Activated B cell treated with CpG ODN at 0.5 μM for 24 hours (primary cell): ENCODE measurements at regions of chr12 and their contacts with region 1.

Region 1: GRCh38 chr12:54032627-54033100 is at the start of gene HOXC5:
- DNase-seq: peak; percentile 51
- ATAC-seq: peak; percentile 63
- H3K4me3 Mint-ChIP-seq: peak within 1 kb of the TSS; percentile 70
- H3K27ac Mint-ChIP-seq: peak within 1 kb of the TSS; percentile 24
- H3K4me1 Mint-ChIP-seq: peaks cover 30% of the 10 kb centered on the region
- H3K27me3 Mint-ChIP-seq: peaks cover 57% of the 10 kb centered on the region
- CTCF ChIP-seq: peak; percentile 66
- total RNA-seq, gene HOXC5: not detected in 2 replicates

Region 2: GRCh38 chr12:53961025-53961761 is 71.5 kb before region 1 on chr12:
- CTCF ChIA-PET with region 1: interaction called, 4 read pairs
- POLR2A ChIA-PET with region 1: interaction called, 5 read pairs
- intact Hi-C with region 1: loop called (anchors 5 kb)
- DNase-seq: no peak
- ATAC-seq: no peak
- H3K4me3 Mint-ChIP-seq: no peak overlapping the region
- H3K27ac Mint-ChIP-seq: no peak overlapping the region
- H3K4me1 Mint-ChIP-seq: peaks cover 26% of the 10 kb centered on the region
- H3K27me3 Mint-ChIP-seq: peaks cover 80% of the 10 kb centered on the region
- CTCF ChIP-seq: no peak

Region 3: DNA sequence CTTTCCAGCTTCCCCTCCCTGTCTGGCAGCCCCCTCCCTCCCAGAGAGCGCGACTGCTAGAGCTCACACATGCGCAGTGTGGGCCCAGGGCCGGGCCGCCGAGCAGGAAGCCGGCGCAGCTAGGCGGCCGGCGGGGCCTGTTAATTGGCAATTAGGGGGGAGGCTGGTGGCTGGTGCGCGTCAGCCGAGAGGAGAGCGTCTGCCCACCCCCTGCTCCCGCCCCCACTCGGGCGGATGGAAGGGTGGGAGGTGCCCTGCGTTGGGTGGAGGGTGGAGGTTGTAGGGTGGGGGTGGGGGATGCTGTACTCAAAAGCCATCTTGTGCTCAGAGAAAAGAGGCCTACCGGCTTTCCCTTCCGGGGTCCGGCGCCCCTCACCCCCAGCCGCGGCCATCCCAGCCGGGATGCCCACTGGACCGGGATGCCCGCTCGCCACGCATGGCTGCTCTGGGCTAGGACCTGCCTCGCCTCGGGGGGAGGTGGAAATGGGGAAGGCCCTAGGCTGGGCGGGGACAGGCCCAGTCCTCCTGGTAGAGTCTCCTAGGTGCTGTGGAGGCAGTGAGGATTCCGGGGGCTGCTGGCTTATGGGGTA is 14.7 kb before region 1 on chr12:
- CTCF ChIA-PET with region 1: interaction called, 12 read pairs
- POLR2A ChIA-PET with region 1: interaction called, 5 read pairs
- intact Hi-C with region 1: no loop called
- DNase-seq: peak; percentile 67
- ATAC-seq: peak; percentile 88
- H3K4me3 Mint-ChIP-seq: peak overlapping the region; percentile 84
- H3K27ac Mint-ChIP-seq: peak overlapping the region; percentile 72
- H3K4me1 Mint-ChIP-seq: peaks cover 29% of the 10 kb centered on the region
- H3K27me3 Mint-ChIP-seq: peaks cover 64% of the 10 kb centered on the region
- CTCF ChIP-seq: no peak

Region 4: DNA sequence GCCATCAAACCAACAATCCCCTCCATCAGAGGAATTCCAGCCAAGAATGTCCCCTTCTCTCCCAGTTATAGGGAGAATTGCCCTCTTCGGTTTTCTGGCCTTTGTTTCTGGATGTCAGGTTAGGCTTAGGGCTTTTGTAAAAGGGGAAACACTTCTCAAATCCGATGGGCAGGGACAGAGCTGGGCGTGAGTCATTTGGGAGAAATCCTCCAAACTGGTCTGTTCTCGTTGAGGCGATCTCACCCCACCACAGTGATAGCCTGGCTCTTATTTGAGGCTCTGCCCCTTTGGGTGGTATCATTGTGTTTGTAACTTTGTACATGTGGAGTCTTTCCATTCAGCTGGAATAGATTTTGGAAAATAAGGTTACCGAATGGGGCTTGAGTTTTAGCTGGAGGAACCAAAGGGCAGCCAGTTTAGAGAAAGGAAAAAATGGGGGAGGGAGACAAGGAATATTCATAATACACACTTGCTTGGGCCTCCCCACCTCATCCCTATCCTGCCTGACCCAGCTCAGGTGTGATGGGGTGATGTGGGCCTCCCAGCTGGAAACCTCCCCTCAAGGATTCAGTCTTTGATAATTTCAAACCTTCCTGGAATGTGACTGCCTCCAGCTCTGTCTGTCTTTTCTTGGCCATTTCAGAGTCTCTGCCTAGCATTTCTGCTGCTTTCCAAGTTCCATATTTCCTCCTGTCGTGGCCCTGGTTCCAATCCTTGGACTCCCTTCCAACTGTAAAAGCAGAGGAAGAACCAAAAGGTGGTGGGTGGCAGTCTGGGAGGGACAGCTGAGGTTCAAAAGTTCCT is 28.5 kb after region 1 on chr12:
- CTCF ChIA-PET with region 1: no interaction called
- POLR2A ChIA-PET with region 1: no interaction called
- intact Hi-C with region 1: no loop called
- DNase-seq: no peak
- ATAC-seq: no peak
- H3K4me3 Mint-ChIP-seq: no peak overlapping the region
- H3K27ac Mint-ChIP-seq: no peak overlapping the region
- H3K4me1 Mint-ChIP-seq: peaks cover 1% of the 10 kb centered on the region
- H3K27me3 Mint-ChIP-seq: peaks cover 35% of the 10 kb centered on the region
- CTCF ChIP-seq: no peak

Region 5: DNA sequence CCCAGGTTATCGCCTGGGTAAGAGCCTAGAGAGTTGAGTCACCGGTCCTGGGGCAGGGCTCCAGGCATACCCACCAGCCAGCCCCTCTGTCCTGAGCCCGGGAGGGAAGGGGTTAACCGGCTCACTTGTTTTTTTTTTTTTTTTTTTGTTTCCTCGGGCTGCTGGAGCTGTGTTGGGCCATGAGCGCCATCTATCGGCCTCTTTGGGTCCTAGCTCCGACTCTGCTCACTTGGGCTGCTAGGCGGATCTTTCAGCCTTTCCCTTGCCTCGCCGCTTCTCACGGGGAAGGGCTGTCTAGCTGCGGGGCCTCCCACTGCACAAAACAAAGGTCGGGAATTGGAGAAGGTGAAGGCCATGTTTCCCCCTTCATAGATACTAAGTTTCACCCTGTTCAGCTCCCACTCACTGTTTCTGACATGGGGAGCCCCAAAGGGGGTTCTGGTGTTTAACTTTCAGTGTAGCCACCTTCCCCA is 158.9 kb after region 1 on chr12:
- CTCF ChIA-PET with region 1: interaction called, 98 read pairs
- POLR2A ChIA-PET with region 1: interaction called, 5 read pairs
- intact Hi-C with region 1: loop called (anchors 1 kb)
- DNase-seq: peak; percentile 58
- ATAC-seq: peak; percentile 61
- H3K4me3 Mint-ChIP-seq: no peak overlapping the region
- H3K27ac Mint-ChIP-seq: no peak overlapping the region
- H3K4me1 Mint-ChIP-seq: peaks cover 29% of the 10 kb centered on the region
- H3K27me3 Mint-ChIP-seq: peaks cover 20% of the 10 kb centered on the region
- CTCF ChIP-seq: no peak

Region 6: GRCh38 chr12:54207484-54208294 is 175.0 kb after region 1 on chr12:
- CTCF ChIA-PET with region 1: interaction called, 65 read pairs
- POLR2A ChIA-PET with region 1: interaction called, 7 read pairs
- intact Hi-C with region 1: loop called (anchors 1 kb)
- DNase-seq: peak; percentile 79
- ATAC-seq: peak; percentile 100
- H3K4me3 Mint-ChIP-seq: no peak overlapping the region
- H3K27ac Mint-ChIP-seq: peak overlapping the region; percentile 30
- H3K4me1 Mint-ChIP-seq: peaks cover 4% of the 10 kb centered on the region
- H3K27me3 Mint-ChIP-seq: peaks cover 35% of the 10 kb centered on the region
- CTCF ChIP-seq: no peak